ENCODE measurements at regions of chr1 and their contacts with region 1.

Region 1: DNA sequence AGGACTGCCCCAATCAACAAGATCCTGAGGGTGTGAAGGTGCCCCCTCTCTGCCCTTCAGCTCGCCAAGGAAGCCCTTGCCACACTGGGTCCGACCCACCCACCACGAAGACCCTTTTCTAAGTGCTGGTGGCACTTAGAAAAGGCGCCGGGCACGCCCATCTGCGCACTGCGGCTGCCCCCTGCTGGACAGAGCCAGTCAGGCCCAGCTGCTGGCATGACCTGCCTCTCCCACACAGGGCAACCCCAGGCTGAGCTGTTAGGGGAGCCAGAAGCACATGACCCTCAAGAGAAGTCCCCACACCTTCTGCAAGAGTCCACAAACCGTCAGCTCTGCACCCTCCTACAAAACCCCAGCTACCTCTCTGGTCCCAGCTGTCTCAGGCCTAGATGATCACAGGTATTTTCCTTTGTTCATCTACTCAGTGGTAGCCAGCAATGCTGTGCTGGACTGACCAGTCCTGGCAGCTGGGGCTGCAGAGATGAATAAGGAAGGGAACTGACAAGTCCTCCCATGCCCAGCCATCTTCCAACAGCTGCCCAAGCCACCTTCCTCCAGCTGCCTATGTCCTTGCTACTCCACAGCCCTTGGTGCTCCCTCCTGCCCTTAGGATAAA is 40.0 kb upstream of the ZC3H12A start:
- DNase-seq: peak; percentile 37 to 68
- H3K4me3 ChIP-seq: no peak overlapping the region
- H3K27ac ChIP-seq: no peak overlapping the region
- H3K4me1 ChIP-seq: no peaks in the 10 kb centered on the region
- H3K27me3 ChIP-seq: peaks cover 0 to 75% of the 10 kb centered on the region in 2 donors
- CTCF ChIP-seq: peak; percentile 79 to 87

Region 2: GRCh38 chr1:36570006-36570768 is 864.2 kb before region 1 on chr1:
- intact Hi-C with region 1: loop called (anchors 5 kb)
- DNase-seq: peak in 1 of 2 donors; percentile 48
- H3K4me3 ChIP-seq: no peak overlapping the region
- H3K27ac ChIP-seq: no peak overlapping the region
- H3K4me1 ChIP-seq: no peaks in the 10 kb centered on the region
- H3K27me3 ChIP-seq: peaks cover 0 to 46% of the 10 kb centered on the region in 2 donors
- CTCF ChIP-seq: no peak

Region 3: DNA sequence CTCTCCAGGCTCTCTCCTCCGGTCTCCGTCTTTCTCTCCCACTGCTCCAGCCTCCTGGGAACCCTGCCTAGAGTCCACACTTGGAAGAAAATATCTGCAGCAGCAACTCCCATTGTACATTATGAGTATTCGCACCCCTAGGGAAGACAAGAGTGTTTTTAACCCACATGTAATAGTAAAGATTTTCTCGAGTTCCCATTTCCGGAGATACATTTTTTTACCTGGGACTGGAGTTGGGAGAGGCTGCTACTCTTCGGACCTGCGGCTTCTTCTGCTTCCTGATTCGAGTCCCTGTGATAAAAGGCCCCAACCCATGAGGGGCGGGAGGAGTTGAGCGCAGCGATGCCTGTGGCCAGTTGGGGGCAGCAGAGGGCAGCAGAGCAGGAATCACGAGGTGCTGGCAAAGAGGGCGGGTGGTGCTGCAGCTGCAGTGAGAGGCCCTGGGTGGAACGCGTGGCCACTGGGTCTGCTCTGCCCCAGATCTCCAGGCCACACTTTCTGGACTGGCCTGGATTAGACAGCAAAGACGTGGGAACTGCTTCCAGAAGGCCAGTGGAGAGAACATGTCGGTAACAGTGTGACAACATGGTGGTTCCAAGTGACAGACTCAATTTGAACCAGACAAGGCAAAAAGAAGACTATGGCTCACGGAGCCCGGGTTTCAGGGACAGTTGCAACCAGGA is 730.7 kb before region 1 on chr1:
- intact Hi-C with region 1: loop called (anchors 5 kb)
- DNase-seq: peak; percentile 49 to 72
- H3K4me3 ChIP-seq: no peak overlapping the region
- H3K27ac ChIP-seq: no peak overlapping the region
- H3K4me1 ChIP-seq: peaks cover 0 to 4% (median 2%) of the 10 kb centered on the region in 4 donors
- H3K27me3 ChIP-seq: peaks cover 0 to 55% of the 10 kb centered on the region in 2 donors
- CTCF ChIP-seq: peak; percentile 53 to 61

Measured in tibial artery (tissue), 4 donors.